Activated CD4-positive, alpha-beta memory T cell treated with anti-CD3 and anti-CD28 coated beads for 36 hours (primary cell): ENCODE measurements at regions of chr1 and their contacts with region 1.

Region 1: DNA sequence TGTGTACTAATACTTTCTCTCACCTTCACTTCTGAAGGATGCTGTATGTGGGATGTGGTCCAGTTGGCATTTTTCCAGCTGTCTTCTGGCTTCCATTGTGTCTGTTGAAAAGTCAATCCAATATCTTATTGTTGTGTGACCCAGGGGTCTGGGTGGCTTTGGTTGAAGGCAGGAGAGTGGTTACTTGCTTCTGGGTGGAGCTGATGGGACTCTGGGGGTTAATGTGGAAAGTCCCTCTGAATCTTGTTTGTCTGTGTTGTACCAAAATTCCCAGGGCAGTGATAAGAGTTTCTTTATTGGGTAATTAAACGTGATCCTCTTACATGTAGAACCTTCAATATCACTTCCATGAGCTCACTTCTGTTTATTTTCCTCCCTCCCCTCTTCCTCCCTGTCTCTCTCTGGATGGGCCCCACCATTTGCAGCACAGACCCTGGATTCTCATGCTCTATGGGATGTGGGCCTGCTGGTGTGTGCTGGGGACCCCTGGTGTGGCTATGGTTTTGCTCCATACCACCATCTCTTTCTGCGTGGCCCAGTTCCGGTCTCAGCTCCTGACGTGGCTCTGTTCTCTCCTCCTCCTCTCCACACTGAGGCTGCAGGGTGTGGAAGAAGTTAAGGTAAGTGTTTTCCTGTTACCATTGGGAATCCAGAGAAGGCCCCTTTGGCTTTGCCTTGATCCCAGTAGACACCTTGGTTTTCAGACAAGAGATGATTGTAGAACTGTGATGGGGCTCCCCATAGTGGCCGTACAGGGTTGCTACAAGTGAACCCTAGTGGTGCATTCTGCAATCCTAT is 71.5 kb downstream of the HHAT start:
- DNase-seq: peak; percentile 71
- H3K4me3 Mint-ChIP-seq: peak overlapping the region; percentile 55
- H3K27ac Mint-ChIP-seq: peak overlapping the region; percentile 68
- H3K4me1 Mint-ChIP-seq: peaks cover 43% of the 10 kb centered on the region
- H3K27me3 Mint-ChIP-seq: no peaks in the 10 kb centered on the region

Region 2: DNA sequence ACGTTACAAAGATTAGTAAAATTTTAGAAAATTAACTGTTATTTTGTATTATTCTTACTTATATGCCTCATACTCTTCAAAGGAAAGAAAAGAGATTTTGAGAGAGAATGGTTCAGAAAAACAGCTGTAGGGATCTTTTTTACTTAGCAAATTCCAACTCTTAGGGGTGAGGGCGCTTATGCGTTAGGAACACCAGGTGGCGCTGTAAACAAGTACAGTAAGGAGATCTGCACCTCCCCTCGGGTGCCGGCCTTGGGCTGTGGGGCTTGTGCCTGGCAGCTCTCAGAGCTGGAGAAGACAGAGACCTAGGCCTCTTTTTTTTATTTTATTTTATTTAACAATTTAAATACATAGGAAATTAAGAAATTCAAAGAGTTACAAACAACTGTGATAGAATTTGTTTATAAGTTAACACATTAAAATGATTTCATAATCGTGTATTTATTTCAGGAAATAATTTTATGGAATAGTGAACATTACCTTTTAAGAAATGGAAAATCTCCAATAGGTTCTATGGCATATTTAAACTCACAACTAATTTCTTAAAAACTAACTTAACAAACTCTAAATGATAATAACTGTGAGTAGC is 539.9 kb before region 1 on chr1:
- CTCF ChIA-PET with region 1: interaction called, 6 read pairs
- POLR2A ChIA-PET with region 1: no interaction called
- intact Hi-C with region 1: loop called (anchors 1 kb)
- DNase-seq: peak; percentile 78
- H3K4me3 Mint-ChIP-seq: no peak overlapping the region
- H3K27ac Mint-ChIP-seq: no peak overlapping the region
- H3K4me1 Mint-ChIP-seq: no peaks in the 10 kb centered on the region
- H3K27me3 Mint-ChIP-seq: peaks cover 10% of the 10 kb centered on the region

Region 3: GRCh38 chr1:210250998-210251679 is 149.1 kb before region 1 on chr1:
- CTCF ChIA-PET with region 1: no interaction called
- POLR2A ChIA-PET with region 1: no interaction called
- intact Hi-C with region 1: loop called (anchors 5 kb)
- DNase-seq: peak; percentile 50
- H3K4me3 Mint-ChIP-seq: peak overlapping the region; percentile 38
- H3K27ac Mint-ChIP-seq: no peak overlapping the region
- H3K4me1 Mint-ChIP-seq: peaks cover 23% of the 10 kb centered on the region
- H3K27me3 Mint-ChIP-seq: peaks cover 66% of the 10 kb centered on the region

Region 4: GRCh38 chr1:210342986-210343780 is 57.1 kb before region 1 on chr1:
- CTCF ChIA-PET with region 1: interaction called, 23 read pairs
- POLR2A ChIA-PET with region 1: interaction called, 8 read pairs
- intact Hi-C with region 1: loop called (anchors 1 kb)
- DNase-seq: no peak
- H3K4me3 Mint-ChIP-seq: no peak overlapping the region
- H3K27ac Mint-ChIP-seq: no peak overlapping the region
- H3K4me1 Mint-ChIP-seq: peaks cover 36% of the 10 kb centered on the region
- H3K27me3 Mint-ChIP-seq: no peaks in the 10 kb centered on the region

Region 5: DNA sequence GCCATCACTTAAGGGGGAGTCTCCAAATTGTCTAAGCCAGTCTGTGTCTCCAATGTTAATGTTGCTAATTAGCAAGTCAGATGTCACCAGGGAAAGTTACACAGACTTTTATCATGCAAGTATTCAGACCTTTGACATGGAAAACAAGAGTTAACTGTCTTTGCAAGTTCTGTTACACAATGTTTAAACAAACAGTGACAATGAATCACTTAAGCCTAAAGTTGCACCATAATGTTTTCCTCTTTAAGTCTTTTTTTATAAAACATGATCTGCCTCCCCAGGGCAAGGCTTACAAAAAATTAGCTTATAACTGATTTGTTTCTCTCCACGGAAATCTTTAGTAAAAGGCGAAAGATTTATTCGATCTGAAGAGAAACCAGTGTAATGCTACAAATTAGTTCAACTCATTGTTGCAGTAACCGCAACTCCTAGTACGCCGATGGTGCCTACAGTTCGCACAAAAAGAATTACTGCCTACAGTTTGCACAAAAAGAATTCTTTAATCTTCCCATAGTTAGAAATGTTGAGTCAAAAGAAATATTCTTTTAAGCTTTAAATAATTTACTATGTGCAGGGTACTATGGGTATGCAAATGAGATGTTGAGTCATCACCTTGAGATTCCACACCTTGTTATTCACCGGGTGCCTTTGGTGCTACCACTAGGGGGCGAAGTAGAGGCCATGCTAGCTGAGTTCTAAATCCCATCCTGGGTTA is 26.2 kb before region 1 on chr1:
- CTCF ChIA-PET with region 1: interaction called, 88 read pairs
- POLR2A ChIA-PET with region 1: interaction called, 53 read pairs
- intact Hi-C with region 1: loop called (anchors 1 kb)
- DNase-seq: peak; percentile 88
- H3K4me3 Mint-ChIP-seq: no peak overlapping the region
- H3K27ac Mint-ChIP-seq: peak overlapping the region; percentile 89
- H3K4me1 Mint-ChIP-seq: peaks cover 34% of the 10 kb centered on the region
- H3K27me3 Mint-ChIP-seq: no peaks in the 10 kb centered on the region

Region 6: GRCh38 chr1:210684466-210685294 is 284.4 kb after region 1 on chr1:
- CTCF ChIA-PET with region 1: no interaction called
- POLR2A ChIA-PET with region 1: no interaction called
- intact Hi-C with region 1: loop called (anchors 10 kb)
- DNase-seq: peak; percentile 14
- H3K4me3 Mint-ChIP-seq: no peak overlapping the region
- H3K27ac Mint-ChIP-seq: no peak overlapping the region
- H3K4me1 Mint-ChIP-seq: no peaks in the 10 kb centered on the region
- H3K27me3 Mint-ChIP-seq: no peaks in the 10 kb centered on the region